ENCODE measurements at regions of chr7 and their contacts with region 1.

Region 1: DNA sequence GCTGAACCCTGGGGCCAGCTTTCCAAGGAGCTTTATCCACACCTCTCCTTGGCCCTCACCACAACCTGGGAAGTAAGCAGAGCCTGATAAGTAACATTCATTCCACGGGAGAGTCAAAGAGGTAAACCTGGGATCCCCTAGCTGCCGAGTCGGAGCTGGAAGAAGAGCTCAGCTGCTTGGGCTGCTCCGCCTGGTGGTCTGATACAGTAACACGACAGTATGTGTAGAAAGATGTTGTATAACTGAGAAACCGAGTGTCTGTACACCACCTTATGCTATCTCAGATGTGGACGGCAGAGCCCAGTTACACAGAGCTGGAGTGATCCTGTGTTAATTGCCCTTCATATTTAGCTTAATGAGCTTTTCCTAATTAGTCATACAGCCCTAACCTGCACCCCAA is 151.3 kb upstream of the KMT2E start:
- DNase-seq: peak; percentile 68

Region 2: DNA sequence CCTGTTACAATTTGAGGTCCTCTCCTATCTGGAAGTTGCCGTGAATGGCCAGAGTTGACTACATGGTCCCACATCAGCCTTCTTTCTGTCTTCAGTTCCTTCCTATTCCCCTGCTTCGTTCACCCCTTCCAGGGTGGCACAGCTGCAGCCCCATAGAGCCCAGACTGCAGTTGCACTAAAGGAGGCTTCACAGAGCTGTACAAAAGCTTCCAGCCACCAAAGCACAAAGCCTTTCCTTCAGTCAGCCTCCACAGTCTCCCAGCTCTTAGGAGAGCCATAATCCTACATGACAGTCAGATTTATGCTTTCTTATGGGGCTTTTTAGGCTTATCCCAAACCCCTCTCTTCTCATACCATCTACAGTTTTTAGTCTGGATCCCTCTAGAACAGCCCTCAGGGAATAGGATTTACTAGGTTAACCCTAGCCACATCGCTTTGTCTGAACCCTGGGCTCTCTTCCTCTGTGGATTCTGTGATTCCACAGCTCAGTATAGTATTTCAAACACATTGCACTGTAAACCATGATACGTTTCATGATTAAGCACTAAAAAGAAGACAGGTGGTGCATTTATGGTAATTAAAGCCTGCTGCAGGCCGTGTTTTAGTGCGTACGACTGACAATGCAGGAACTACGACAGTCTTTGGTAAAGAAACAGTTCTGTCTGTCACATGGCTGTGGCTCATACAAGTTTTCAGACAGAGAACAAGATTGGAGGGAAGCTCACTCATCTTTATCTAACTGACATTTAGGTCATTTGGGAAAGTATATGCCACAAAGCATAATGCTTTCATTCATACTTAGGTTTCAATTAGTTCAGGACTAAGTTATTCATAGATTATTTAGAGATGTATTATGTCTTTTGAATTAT is 57.0 kb before region 1 on chr7:
- CTCF ChIA-PET with region 1: no interaction called
- POLR2A ChIA-PET with region 1: no interaction called
- DNase-seq: no peak

Region 3: GRCh38 chr7:104848138-104848990 is 14.4 kb before region 1 on chr7:
- CTCF ChIA-PET with region 1: interaction called, 10 read pairs
- POLR2A ChIA-PET with region 1: no interaction called
- DNase-seq: peak; percentile 50

Region 4: DNA sequence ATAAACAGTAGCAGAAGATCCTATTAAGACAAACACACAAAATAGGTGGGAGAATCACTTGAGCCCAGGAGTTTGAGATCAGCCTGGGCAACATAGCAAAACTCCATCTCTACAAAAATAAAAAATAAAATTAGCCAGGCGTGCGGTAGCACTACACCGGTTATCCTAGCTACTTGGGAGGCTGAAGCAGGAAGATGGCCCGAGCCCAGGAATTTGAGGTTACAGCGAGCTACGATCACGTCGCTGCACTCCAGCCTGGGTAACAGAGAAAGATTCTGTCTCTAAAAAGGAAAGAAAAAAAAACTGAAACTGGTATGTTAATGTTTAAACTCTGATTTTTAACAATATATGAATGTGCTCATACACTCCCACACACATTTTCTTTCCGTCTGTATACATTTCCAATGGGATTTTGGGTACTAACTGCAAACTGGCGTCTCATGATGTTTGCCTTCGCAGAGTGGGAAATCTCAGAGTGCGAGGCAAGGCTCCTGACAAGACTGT is 10.7 kb after region 1 on chr7:
- CTCF ChIA-PET with region 1: interaction called, 10 read pairs
- POLR2A ChIA-PET with region 1: no interaction called
- DNase-seq: no peak

Region 5: DNA sequence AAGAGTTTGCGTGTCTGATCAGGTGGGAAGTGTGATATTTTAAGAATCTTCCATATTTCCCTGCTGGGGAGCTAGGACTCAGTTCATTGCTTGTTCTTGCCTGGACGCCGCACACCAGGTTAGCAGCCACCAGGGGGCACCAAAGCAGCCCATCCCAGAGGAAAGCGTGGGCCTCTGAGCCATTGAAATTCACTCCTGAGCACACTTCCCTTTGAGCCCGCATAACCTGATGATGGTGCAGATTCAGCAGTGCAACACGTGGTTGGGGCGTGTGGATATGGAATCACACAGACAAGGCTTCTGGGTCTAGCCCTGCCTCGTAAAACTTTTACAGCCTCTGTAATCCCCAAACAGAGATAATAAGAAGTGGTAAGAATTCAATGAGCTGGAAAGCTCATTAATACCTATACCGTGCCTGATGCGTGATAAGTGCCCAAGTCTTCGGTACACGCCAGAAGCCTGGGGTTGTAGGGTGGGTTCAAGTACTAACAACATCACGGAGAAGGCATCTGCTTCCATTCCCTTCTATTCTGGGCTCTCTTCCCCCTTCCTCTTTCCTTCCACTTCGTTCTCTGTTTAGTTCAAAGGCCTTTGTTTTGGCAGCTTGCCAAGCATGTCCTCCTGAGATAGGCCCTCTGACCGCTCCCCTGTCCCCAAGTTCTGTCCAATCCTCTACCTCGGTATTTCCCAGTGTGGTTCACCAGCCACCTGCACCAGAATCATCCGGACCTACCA is 21.2 kb after region 1 on chr7:
- CTCF ChIA-PET with region 1: interaction called, 23 read pairs
- POLR2A ChIA-PET with region 1: no interaction called
- DNase-seq: peak; percentile 90

Region 6: GRCh38 chr7:104923010-104923421 is 60.3 kb after region 1 on chr7:
- CTCF ChIA-PET with region 1: interaction called, 12 read pairs
- POLR2A ChIA-PET with region 1: no interaction called
- DNase-seq: peak; percentile 61

Measured in HEK293T (cell line).